Motor neuron (in vitro differentiated cells): ENCODE measurements at regions of chr6 and their contacts with region 1.

Region 1: DNA sequence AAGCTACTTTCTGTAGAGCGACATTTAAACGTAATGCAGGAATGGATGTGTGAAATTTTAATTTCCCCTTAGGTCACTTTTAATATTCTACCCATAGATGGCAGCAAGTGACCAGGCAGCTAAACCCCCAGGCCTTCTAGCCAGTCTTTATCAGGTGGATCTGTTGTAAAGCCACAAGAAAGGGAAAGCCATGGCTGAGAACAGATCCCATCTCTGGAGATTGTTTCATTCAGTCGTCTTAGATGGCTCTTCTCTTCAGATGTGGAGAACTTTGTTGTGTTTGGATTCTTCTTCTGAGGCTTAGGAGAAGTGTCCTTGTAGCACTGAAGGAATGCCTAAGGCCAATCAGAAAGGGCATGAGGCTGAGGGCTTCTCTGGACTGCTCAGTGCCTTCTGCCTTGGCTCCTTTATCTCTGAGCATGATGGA is 15.8 kb upstream of the RNF182 start:
- ATAC-seq: peak; percentile 80 to 94 (median 89)
- H3K4me3 ChIP-seq: no peak overlapping the region
- H3K27ac ChIP-seq: no peak overlapping the region
- H3K4me1 ChIP-seq: no peaks in the 10 kb centered on the region

Region 2: GRCh38 chr6:14059791-14060444 is 150.9 kb after region 1 on chr6:
- in situ Hi-C with region 1: loop called in 8 of 9 experiments (anchors 10 to 25 kb)
- ATAC-seq: no peak
- H3K4me3 ChIP-seq: no peak overlapping the region
- H3K27ac ChIP-seq: no peak overlapping the region
- H3K4me1 ChIP-seq: peaks cover 0 to 2% of the 10 kb centered on the region in 2 donors

Region 3: DNA sequence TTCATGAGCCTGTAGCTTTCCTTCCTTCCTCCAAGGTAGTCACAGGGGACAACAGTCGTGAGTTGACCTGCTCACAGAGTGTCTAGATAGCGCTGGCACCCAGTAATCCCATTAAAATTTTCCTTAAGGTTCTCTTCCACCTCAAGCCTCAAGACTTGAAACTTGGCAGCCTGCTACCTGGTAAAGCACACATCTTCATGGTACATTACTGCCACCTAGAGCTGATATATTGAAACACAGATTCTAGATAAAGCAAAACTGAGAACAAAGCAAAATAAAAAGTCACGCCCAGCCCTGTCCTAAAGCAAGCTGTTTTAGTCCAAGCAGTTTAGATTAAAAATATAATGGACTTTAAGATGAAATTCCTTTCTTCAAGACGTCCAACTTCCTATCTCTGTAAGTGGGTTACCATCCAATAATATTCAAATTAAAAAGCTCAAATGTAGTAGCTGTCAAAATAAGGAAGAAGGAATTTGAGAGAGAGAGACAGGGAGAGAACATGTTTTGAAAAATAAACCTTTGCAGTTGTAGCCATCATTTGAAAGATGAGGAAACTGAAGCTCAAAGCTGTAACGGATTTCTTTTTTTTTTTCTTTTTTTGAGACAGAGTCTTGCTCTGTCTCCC is 157.9 kb after region 1 on chr6:
- in situ Hi-C with region 1: loop called in 6 of 9 experiments (anchors 10 to 25 kb)
- ATAC-seq: peak; percentile 39 to 89 (median 60)
- H3K4me3 ChIP-seq: no peak overlapping the region
- H3K27ac ChIP-seq: no peak overlapping the region
- H3K4me1 ChIP-seq: no peaks in the 10 kb centered on the region

Region 4: GRCh38 chr6:15628499-15629131 is 1719.6 kb after region 1 on chr6:
- in situ Hi-C with region 1: loop called in 1 of 9 experiments (anchors 25 kb)
- ATAC-seq: peak in 3 of 8 experiments; percentile 52 to 94 (median 93)
- H3K4me3 ChIP-seq: no peak overlapping the region
- H3K27ac ChIP-seq: no peak overlapping the region
- H3K4me1 ChIP-seq: no peaks in the 10 kb centered on the region